WTC11 (cell line): ENCODE measurements at regions of chr22 and their contacts with region 1.

Region 1: DNA sequence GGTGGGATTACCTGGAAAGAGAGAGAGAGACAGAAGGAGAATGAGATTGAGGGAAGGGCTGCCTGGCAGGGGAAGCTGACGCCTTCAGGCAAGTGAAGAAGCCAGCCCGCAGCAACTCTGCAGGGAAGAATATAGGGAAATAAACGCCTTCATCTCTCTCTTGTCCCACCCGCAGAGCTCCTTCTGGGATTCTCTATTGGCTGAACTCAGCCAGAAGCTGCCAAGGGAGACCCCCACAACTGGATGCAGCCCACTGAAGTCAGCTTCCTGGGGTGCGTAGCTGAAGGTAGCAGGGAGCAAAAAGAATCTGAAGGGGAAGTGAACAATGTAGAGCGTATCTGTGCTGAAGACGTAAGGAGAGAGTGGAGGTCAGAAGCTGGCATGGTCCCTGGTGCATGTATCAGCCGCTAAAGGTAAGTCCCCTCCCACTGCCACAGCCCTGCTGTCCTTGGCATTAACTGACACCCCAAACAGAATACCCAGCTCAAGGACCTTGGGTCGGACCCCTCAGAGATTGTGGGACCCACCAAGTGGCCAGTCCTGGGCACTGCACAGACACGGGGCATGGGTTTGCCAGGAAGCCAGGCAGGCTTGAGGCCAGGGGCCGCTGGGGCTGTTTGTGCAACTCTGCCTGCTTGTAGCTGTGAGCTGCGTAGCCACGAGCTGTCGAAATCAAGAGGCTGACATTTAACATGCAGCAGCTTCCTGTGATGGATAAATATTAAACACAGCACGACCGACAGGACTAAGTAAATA is 469.9 kb downstream of the MN1 start:
- DNase-seq: peak; percentile 70
- ATAC-seq: peak; percentile 94
- H3K4me3 Mint-ChIP-seq: no peak overlapping the region
- H3K27ac Mint-ChIP-seq: no peak overlapping the region
- H3K4me1 Mint-ChIP-seq: peaks cover 28% of the 10 kb centered on the region
- H3K27me3 Mint-ChIP-seq: peaks cover 10% of the 10 kb centered on the region
- CTCF ChIP-seq: peak; percentile 38; the same call in 1 of the 2 replicates

Region 2: GRCh38 chr22:27318516-27318915 is 13.2 kb before region 1 on chr22:
- CTCF ChIA-PET with region 1: interaction called, 15 read pairs
- POLR2A ChIA-PET with region 1: no interaction called
- DNase-seq: no peak
- ATAC-seq: no peak; the same call in 1 of the 2 replicates
- H3K4me3 Mint-ChIP-seq: no peak overlapping the region
- H3K27ac Mint-ChIP-seq: no peak overlapping the region
- H3K4me1 Mint-ChIP-seq: peaks cover 26% of the 10 kb centered on the region
- H3K27me3 Mint-ChIP-seq: peaks cover 4% of the 10 kb centered on the region; the same call in 1 of the 2 replicates
- CTCF ChIP-seq: no peak

Region 3: GRCh38 chr22:27345142-27346090 is 13.7 kb after region 1 on chr22:
- CTCF ChIA-PET with region 1: interaction called, 13 read pairs
- POLR2A ChIA-PET with region 1: no interaction called
- DNase-seq: no peak
- ATAC-seq: no peak
- H3K4me3 Mint-ChIP-seq: no peak overlapping the region
- H3K27ac Mint-ChIP-seq: no peak overlapping the region
- H3K4me1 Mint-ChIP-seq: peaks cover 12% of the 10 kb centered on the region
- H3K27me3 Mint-ChIP-seq: no peaks in the 10 kb centered on the region; the same call in 1 of the 2 replicates
- CTCF ChIP-seq: no peak

Region 4: DNA sequence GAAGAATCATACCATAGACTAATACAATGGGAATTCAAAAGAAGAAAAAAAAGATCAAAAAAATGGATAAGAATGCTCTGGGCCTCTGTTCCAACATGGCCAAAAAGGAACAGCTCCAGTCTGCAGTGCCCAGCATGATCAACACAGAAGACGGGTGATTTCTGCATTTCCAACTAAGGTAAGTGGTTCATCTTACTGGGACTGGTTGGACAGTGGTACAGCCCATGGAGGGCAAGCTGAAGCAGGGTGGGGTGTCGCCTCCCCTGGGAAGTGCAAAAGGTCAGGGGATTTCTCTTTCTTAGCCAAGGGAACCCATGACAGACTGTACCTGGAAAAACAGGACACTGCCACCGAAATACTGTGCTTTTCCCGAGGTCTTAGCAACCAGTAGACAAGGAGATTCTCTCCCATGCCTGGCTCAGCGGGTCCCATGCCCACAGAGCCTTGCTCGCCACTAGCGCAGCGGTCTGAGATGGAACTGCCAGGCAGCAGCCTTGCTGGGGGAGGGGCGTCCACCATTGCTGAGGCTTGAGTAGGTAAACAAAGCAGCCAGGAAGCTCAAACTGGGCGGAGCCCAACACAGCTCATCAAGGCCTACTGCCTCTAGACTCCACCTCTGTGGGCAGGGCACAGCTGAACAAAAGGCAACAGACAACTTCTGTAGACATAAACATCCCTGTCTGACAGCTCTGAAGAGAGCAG is 41.4 kb after region 1 on chr22:
- CTCF ChIA-PET with region 1: interaction called, 10 read pairs
- POLR2A ChIA-PET with region 1: no interaction called
- DNase-seq: peak; percentile 96
- ATAC-seq: peak; percentile 98
- H3K4me3 Mint-ChIP-seq: peak overlapping the region; percentile 58
- H3K27ac Mint-ChIP-seq: no peak overlapping the region
- H3K4me1 Mint-ChIP-seq: peaks cover 41% of the 10 kb centered on the region
- H3K27me3 Mint-ChIP-seq: no peaks in the 10 kb centered on the region; the same call in 1 of the 2 replicates
- CTCF ChIP-seq: no peak

Region 5: GRCh38 chr22:27391092-27391770 is 59.5 kb after region 1 on chr22:
- CTCF ChIA-PET with region 1: no interaction called
- POLR2A ChIA-PET with region 1: no interaction called
- DNase-seq: no peak
- ATAC-seq: peak; percentile 79
- H3K4me3 Mint-ChIP-seq: no peak overlapping the region
- H3K27ac Mint-ChIP-seq: no peak overlapping the region
- H3K4me1 Mint-ChIP-seq: peaks cover 4% of the 10 kb centered on the region
- H3K27me3 Mint-ChIP-seq: no peaks in the 10 kb centered on the region; the same call in 1 of the 2 replicates
- CTCF ChIP-seq: no peak